ENCODE measurements at regions of chr19 and their contacts with region 1.

Region 1: DNA sequence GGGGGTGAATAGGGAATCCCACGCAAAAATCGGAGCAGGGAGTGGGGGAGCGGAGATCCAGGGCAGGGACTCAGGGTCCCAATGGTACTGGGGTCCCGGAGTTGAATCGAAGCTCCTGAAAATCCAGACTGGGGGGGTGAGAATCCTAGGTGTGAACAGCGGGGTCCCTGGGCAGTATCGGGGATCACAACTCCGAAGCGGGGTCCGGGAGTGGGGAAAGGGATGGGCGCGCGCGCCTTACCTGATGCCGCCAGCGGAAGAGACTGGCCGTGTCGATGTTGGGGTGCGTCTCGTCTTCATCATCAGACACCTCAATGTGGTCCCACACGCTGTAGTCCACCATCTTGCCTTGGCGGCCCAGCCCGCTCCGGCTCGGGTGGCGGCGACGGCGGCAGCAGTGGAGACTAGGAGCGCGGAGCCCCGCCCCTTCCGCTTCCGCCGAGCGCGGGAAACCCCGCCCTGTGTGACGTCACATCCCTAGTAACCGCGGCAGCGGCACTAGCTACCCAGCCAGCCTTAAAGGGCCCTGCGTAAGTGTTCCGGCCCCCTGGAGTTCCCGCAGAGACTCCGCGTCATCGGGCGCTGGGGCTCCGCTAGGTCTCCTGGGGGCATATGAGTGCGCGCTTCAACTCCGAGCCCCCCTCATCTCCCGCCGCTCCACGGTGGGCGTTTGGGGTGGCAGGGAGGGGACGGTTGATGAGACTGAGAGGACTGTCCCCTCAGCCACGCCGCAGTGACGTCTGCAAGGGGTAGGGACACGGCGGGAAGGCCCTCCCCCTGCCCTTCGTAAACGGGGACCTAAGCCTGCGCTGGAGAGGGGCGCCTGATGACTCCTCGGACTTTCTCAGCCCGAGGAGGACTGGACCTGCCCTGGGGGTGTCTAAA is at the start of gene CDC37:
- DNase-seq: peak; percentile 89
- ATAC-seq: peak; percentile 85
- H3K4me3 ChIP-seq: peak within 1 kb of the TSS; percentile 87 to 93 (median 90)
- H3K27ac ChIP-seq: peak within 1 kb of the TSS; percentile 62
- H3K4me1 ChIP-seq: peaks cover 17% of the 10 kb centered on the region
- H3K27me3 ChIP-seq: peaks cover 0 to 27% of the 10 kb centered on the region in 2 experiments; a peak in 4 of 5 replicates
- CTCF ChIP-seq: no peak
- EP300 ChIP-seq: no peak
- POLR2A ChIP-seq: peak; percentile 89 to 96
- RAD21 ChIP-seq: no peak
- total RNA-seq, gene CDC37: 134 and 158 TPM in 2 replicates

Region 2: GRCh38 chr19:10346509-10346908 is 56.9 kb before region 1 on chr19:
- CTCF ChIA-PET with region 1: no interaction called
- POLR2A ChIA-PET with region 1: no interaction called
- in situ Hi-C with region 1: no loop called
- intact Hi-C with region 1: no loop called
- DNase-seq: peak; percentile 74
- ATAC-seq: peak; percentile 90
- H3K4me3 ChIP-seq: peak overlapping the region in 1 of 3 experiments; percentile 31; a peak in 1 of 6 replicates
- H3K27ac ChIP-seq: peak overlapping the region; percentile 41
- H3K4me1 ChIP-seq: peaks cover 18% of the 10 kb centered on the region
- H3K27me3 ChIP-seq: no peaks in the 10 kb centered on the region
- CTCF ChIP-seq: no peak
- EP300 ChIP-seq: no peak
- POLR2A ChIP-seq: no peak
- RAD21 ChIP-seq: no peak

Region 3: GRCh38 chr19:10416380-10417257 is 13.2 kb after region 1 on chr19:
- CTCF ChIA-PET with region 1: interaction called, 37 read pairs
- POLR2A ChIA-PET with region 1: interaction called, 12 read pairs
- in situ Hi-C with region 1: no loop called
- intact Hi-C with region 1: no loop called
- DNase-seq: peak; percentile 83
- ATAC-seq: peak; percentile 83
- H3K4me3 ChIP-seq: peak overlapping the region; percentile 60 to 81 (median 67)
- H3K27ac ChIP-seq: peak overlapping the region; percentile 58
- H3K4me1 ChIP-seq: peaks cover 40% of the 10 kb centered on the region
- H3K27me3 ChIP-seq: peaks cover 16 to 44% of the 10 kb centered on the region in 2 experiments
- CTCF ChIP-seq: peak; percentile 92
- EP300 ChIP-seq: 0 out of 4 replicates have a peak, but pooled peaks of 1 of the 2 experiments have one; percentile 42
- POLR2A ChIP-seq: no peak
- RAD21 ChIP-seq: peak; percentile 66

Region 4: DNA sequence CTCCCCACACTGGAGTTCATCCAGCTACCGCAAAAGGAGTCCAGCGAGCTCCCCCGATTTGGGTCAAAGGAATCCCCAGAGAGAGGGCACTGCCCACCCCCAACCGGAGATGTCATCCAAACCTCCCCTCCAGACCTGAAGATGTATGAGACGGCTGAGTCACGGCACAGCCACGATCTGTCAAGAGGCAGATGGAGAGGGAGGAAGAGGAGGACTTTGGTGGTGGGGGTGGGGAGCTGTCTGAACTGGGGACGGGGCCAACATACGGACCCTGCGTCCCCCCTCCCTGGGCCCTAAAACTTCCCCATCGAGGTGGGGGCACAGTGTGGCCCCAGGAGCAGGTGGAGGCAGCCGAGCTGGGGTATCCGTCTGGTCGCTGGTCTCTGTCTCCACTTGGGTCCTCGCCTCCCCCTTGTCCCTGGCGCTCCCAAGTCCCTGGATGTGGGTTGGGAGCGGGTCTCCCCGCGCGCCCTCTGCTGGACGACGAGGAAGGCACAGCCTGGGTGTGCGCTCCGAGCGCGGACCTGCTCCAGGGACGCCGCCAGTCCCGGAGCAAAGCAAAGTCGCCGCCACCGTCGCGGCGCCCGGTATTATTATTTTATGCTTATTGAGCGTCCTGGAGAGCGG is 20.7 kb after region 1 on chr19:
- CTCF ChIA-PET with region 1: interaction called, 40 read pairs
- POLR2A ChIA-PET with region 1: no interaction called
- in situ Hi-C with region 1: no loop called
- intact Hi-C with region 1: loop called (anchors 1 kb)
- DNase-seq: peak; percentile 58
- ATAC-seq: peak; percentile 92
- H3K4me3 ChIP-seq: peak overlapping the region; percentile 43 to 75 (median 48); a peak in 5 of 6 replicates
- H3K27ac ChIP-seq: no peak overlapping the region
- H3K4me1 ChIP-seq: peaks cover 41% of the 10 kb centered on the region
- H3K27me3 ChIP-seq: peaks cover 12 to 58% of the 10 kb centered on the region in 2 experiments
- CTCF ChIP-seq: peak; percentile 96
- EP300 ChIP-seq: no peak
- POLR2A ChIP-seq: no peak
- RAD21 ChIP-seq: peak; percentile 56

Measured in HepG2 (cell line).